ENCODE measurements at regions of chr7 and their contacts with region 1.

Region 1: DNA sequence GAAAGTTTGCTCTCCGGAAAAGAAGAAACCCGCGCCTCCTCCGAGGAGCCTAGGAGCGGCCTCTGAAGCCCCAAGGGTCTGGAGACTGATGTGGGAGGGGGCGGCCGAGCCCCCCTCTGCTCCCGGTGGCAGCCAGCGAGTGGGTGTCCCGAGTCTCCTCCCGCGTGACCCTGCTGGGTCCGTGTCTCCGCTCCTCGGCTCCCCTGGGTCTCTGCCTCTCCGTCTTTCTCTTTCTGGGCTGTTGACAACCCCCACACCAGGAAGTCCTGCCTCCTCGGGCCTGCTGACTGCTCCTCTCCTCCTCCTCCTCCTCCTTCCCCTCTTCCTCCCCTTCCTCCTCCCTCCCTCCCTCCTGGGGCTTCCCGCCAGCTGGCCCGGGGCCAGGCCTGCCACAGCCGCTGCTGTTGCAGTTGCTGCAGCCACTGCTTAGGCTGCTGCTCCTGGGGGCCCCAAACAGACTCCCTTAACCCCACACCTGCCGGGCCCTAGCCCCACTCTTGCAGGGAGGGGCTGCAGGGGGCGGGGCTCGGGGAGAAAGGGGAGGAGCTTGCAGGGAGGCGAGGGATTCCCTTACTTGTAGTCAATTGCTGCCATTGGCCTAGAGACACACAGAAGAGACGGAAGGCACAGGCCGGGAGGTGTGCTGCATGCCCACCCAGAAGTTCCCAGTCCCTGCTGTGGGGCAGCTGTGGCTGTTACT is at the start of gene TSC22D4:
- DNase-seq: peak; percentile 90
- H3K4me3 ChIP-seq: peak within 1 kb of the TSS; percentile 92 to 94 (median 93)
- H3K27ac ChIP-seq: peak within 1 kb of the TSS; percentile 57
- H3K4me1 ChIP-seq: peaks cover 23% of the 10 kb centered on the region
- H3K27me3 ChIP-seq: no peaks in the 10 kb centered on the region
- CTCF ChIP-seq: no peak
- total RNA-seq, gene TSC22D4: 12.0 to 35.2 TPM

Region 2: DNA sequence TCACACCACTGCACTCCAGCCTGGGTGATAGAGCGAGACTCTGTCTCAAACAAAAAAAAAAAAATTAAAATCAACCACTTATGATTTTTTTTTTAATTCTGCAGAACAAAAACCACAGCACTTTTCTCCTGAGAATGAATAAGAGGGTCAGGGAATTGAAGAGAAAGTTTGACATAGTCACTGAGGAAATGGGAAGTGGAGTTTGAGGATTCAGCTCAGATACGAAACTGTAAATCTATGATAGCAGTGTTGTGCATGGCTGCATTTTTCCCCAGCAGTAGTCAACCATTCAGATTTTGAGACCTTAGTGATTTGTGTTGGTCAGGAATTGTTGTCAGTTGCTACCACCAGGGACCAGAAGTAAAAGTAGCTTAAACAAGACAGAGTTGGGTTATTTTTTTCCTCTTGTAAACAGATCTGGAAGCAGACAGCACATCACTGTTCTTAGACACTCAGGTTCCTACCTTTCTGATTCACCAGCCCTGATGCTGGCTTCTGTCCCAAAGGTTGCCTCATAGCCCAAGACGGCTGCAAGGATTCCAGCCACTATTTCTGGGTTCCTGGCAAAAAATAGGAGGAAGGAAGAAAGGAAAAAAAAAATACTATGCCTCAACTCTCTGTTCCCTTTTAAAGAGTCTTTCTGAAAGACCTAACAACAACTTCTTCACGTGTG is 85.7 kb before region 1 on chr7:
- CTCF ChIA-PET with region 1: no interaction called
- dilution Hi-C with region 1: no loop called
- in situ Hi-C with region 1: no loop called
- intact Hi-C with region 1: no loop called
- DNase-seq: peak; percentile 19
- H3K4me3 ChIP-seq: no peak overlapping the region
- H3K27ac ChIP-seq: no peak overlapping the region
- H3K4me1 ChIP-seq: no peaks in the 10 kb centered on the region
- H3K27me3 ChIP-seq: no peaks in the 10 kb centered on the region
- CTCF ChIP-seq: no peak

Region 3: DNA sequence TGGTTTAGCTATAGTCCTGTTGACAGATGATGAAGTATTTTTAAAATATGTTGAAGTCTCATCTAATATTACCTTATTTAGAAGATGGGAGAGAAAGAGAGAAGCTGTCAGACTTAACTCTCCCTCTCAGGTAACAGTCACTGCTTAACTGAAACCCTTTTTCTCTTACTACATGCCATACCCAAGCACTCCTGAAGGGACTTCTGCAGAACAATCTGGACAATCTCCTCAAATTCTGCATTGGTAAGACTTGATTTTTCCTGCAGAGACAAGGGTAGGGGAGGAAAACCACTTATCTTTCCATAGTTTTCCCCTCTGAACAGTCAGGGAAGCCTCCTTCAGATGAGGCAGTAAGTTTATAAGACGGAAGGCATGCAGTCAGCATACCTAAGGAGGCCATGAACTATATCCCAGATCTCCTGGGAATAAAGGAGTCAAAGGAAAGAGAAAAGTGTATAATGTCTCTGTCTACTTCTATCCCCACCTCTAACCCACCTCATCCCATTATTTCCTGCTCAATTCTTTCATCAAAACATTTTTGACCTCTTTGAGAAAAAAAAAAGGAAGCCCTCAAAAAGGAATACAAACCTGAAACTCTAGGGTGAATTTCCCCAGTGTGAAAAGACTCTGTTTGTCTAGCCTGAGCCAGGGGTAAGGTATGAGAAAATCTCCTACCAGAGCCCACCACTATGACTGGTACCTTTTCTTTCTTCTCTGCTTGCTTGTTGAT is 60.0 kb before region 1 on chr7:
- CTCF ChIA-PET with region 1: no interaction called
- dilution Hi-C with region 1: no loop called
- in situ Hi-C with region 1: no loop called
- intact Hi-C with region 1: no loop called
- DNase-seq: no peak
- H3K4me3 ChIP-seq: no peak overlapping the region
- H3K27ac ChIP-seq: no peak overlapping the region
- H3K4me1 ChIP-seq: no peaks in the 10 kb centered on the region
- H3K27me3 ChIP-seq: no peaks in the 10 kb centered on the region
- CTCF ChIP-seq: no peak

Region 4: GRCh38 chr7:100509231-100509630 is 30.1 kb after region 1 on chr7:
- CTCF ChIA-PET with region 1: no interaction called
- dilution Hi-C with region 1: no loop called
- in situ Hi-C with region 1: no loop called
- intact Hi-C with region 1: loop called (anchors 2 kb)
- DNase-seq: peak; percentile 93
- H3K4me3 ChIP-seq: no peak overlapping the region
- H3K27ac ChIP-seq: no peak overlapping the region
- H3K4me1 ChIP-seq: peaks cover 8% of the 10 kb centered on the region
- H3K27me3 ChIP-seq: no peaks in the 10 kb centered on the region
- CTCF ChIP-seq: no peak

Region 5: DNA sequence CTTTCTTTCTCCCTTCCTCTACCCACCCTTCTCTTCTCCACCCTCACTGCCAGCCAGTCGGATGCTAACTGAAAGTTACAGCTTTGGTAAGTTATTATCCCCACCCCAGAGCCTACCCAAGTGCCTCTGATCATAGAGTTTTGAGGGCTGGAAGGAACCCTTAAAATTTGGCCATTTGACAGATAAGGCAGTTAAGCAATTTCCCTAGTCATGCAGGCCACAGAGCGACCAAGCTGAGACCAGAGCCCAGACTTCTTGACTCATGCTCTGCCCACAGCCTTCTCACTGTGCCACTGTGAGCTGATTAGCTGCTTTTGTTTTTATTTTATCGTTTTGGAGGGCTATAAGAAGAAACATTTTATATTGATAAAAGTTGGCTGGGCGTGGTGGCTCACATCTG is 77.4 kb after region 1 on chr7:
- CTCF ChIA-PET with region 1: interaction called, 4 read pairs
- dilution Hi-C with region 1: no loop called
- in situ Hi-C with region 1: loop called (anchors 5 to 10 kb)
- intact Hi-C with region 1: no loop called
- DNase-seq: no peak
- H3K4me3 ChIP-seq: no peak overlapping the region
- H3K27ac ChIP-seq: no peak overlapping the region
- H3K4me1 ChIP-seq: no peaks in the 10 kb centered on the region
- H3K27me3 ChIP-seq: no peaks in the 10 kb centered on the region
- CTCF ChIP-seq: no peak

Region 6: DNA sequence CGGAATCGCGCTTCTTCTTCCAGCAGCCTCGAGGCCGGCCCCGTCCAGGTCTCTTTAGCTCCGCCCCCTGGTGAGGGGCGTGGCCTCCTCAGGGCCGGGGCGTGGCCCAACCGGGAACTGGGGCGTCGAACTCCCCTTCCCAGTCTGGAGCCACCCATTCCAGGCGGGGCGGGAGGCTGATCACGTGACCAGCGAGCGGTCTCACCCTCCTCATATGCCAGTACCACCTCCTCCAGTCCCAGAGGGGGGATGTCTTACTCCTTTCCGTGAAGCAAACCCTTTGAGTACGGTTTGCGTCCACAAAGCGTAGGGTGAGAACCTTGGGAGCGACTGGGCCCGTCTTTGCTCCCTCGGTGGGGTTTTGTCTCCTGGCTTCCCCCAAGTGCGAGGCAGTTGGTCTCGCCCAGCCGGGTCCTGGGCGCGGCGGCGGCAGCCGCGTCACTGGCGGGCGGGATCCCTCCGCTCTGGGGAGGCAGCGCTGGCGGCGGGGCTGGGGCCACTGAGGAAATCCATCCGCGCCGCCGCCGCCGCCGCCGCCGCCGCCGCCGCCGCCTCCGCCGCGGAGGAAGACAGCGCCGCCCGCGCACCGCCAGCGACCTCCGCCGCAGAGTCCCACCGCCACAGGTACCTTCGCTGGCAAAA is 194.3 kb after region 1 on chr7 and contains the start of gene GNB2:
- CTCF ChIA-PET with region 1: no interaction called
- dilution Hi-C with region 1: no loop called
- in situ Hi-C with region 1: no loop called
- intact Hi-C with region 1: loop called (anchors 5 kb)
- DNase-seq: peak; percentile 99
- H3K4me3 ChIP-seq: peak within 1 kb of the TSS; percentile 82 to 93 (median 84)
- H3K27ac ChIP-seq: peak within 1 kb of the TSS; percentile 89
- H3K4me1 ChIP-seq: peaks cover 5% of the 10 kb centered on the region
- H3K27me3 ChIP-seq: no peaks in the 10 kb centered on the region
- CTCF ChIP-seq: no peak
- total RNA-seq, gene GNB2: 91.4 to 243 TPM

Measured in mammary epithelial cell (primary cell).